ENCODE measurements at regions of chr6 and their contacts with region 1.

Region 1: GRCh38 chr6:53544470-53545308 is at the start of gene GCLC:
- DNase-seq: peak; percentile 84
- H3K4me3 Mint-ChIP-seq: peak within 1 kb of the TSS; percentile 96
- H3K27ac Mint-ChIP-seq: peak within 1 kb of the TSS; percentile 96
- H3K4me1 Mint-ChIP-seq: peaks cover 49% of the 10 kb centered on the region
- H3K27me3 Mint-ChIP-seq: peaks cover 10% of the 10 kb centered on the region
- total RNA-seq, gene GCLC: 26.1 and 28.9 TPM in 2 replicates

Region 2: DNA sequence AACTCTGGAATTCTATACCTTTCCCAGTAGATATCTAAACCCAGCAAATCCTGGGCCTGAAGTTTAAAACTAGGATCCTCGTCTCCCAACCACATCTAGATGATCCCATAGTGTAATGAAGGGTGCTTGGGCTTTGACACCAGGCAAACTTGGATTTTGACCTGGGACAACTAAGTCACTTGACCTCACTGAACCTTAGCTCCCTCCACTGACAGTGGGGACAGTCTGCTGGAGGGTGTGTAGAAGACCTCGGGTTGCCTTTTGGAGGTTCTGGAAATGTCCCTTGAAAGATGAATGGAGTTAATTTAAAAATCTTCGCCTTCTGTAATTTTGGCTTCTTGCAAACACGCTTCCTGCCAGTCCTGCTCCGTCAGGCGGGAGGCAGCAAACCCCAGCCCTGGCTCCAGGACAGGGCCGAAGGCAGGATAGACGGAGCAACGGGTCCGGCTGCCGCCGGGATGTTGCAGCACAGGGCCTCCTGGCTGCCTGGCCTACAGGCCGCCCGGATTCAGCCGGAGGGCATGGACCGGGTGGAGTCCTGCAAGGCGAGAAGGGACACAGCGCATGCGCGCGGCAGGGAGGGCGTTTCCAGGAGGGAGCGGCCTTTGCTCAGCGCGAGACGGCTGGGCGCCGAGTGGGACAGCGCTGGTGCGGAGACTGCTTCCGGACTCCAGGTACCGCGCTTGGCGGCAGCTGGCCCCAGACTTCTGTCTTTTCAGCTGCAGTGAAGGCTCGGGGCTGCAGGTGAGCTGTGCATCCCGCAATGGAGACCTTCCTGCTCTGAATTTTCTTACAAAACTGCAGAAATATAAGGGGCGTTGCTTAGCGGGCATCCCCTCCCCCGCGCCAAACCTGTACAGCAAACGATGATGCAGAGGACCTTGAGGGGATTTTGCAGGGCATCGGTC is 873.9 kb before region 1 on chr6 and contains the start of gene TMEM14A:
- intact Hi-C with region 1: loop called (anchors 5 kb)
- DNase-seq: peak; percentile 91
- H3K4me3 Mint-ChIP-seq: peak within 1 kb of the TSS; percentile 92
- H3K27ac Mint-ChIP-seq: peak within 1 kb of the TSS; percentile 60
- H3K4me1 Mint-ChIP-seq: peaks cover 33% of the 10 kb centered on the region
- H3K27me3 Mint-ChIP-seq: peaks cover 5% of the 10 kb centered on the region
- total RNA-seq, gene TMEM14A: 12.2 and 15.1 TPM in 2 replicates

Region 3: DNA sequence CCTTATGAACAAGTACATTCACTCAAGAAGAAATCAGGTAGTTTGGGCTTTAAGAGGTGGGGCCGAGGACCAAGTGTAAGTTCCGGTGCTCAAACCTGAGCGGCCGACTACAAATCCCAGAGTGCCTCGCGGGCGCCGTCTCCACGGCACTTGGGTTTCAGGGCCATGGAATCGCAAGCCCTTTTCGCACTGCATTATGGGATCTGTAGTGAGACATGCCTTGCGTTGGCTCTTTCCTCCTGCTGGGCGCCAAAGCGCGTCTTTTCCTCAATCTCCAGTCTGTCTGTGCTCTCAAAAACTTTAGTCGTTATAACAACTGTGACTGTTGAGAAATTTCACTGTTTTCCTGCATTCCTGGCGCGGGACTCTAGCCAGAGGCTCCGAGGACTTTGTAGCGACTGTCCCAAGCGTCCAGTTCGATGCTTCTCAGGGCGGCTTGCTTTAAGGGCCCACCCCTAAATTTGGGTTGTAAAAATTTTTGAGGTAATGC is 479.9 kb before region 1 on chr6:
- intact Hi-C with region 1: loop called (anchors 1 kb)
- DNase-seq: peak; percentile 94
- H3K4me3 Mint-ChIP-seq: peak overlapping the region; percentile 99
- H3K27ac Mint-ChIP-seq: peak overlapping the region; percentile 99
- H3K4me1 Mint-ChIP-seq: peaks cover 46% of the 10 kb centered on the region
- H3K27me3 Mint-ChIP-seq: peaks cover 2% of the 10 kb centered on the region

Region 4: GRCh38 chr6:53348371-53349208 is 196.1 kb before region 1 on chr6 and contains the start of gene ELOVL5:
- intact Hi-C with region 1: loop called (anchors 5 kb)
- DNase-seq: peak; percentile 94
- H3K4me3 Mint-ChIP-seq: peak within 1 kb of the TSS; percentile 96
- H3K27ac Mint-ChIP-seq: peak within 1 kb of the TSS; percentile 93
- H3K4me1 Mint-ChIP-seq: peaks cover 48% of the 10 kb centered on the region
- H3K27me3 Mint-ChIP-seq: peaks cover 8% of the 10 kb centered on the region
- total RNA-seq, gene ELOVL5: 121 and 131 TPM in 2 replicates

Region 5: DNA sequence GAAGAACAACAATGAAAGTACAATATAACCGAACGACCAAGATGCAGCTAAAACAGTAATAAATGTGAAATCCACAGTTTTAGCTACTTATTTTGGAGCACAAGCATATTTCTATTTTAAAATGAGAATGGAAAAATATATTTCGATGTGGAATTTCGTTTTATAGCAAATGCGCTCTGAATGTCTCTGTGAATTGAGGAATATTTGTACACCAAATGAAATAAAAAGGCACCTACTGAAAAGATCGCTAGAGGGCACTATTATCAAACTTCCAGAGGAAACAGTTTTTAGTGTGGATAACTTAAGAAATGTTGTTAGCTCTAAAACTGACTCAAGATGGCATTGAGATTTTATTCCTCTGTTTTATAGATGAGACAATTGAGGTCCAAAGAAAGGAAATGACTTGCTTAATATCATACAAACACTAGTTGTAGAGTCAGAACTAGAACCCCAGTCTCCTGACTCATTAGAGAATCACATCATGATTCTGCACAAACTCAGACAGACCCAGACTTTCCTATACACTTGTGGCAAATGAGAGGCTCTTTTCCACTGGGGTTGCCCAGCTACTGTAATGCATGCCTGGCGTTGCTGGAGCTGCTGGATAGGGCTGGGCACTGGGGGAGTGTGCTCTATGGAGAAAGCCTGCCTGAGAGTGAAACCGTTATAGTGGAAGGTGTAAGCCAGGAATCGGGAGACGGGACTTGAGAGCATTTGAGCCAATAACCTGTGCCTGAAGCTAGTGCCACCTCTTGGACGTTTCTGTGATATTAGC is 51.6 kb before region 1 on chr6:
- intact Hi-C with region 1: loop called (anchors 1 kb)
- DNase-seq: no peak
- H3K4me3 Mint-ChIP-seq: no peak overlapping the region
- H3K27ac Mint-ChIP-seq: peak overlapping the region; percentile 25
- H3K4me1 Mint-ChIP-seq: peaks cover 15% of the 10 kb centered on the region
- H3K27me3 Mint-ChIP-seq: peaks cover 22% of the 10 kb centered on the region

Region 6: DNA sequence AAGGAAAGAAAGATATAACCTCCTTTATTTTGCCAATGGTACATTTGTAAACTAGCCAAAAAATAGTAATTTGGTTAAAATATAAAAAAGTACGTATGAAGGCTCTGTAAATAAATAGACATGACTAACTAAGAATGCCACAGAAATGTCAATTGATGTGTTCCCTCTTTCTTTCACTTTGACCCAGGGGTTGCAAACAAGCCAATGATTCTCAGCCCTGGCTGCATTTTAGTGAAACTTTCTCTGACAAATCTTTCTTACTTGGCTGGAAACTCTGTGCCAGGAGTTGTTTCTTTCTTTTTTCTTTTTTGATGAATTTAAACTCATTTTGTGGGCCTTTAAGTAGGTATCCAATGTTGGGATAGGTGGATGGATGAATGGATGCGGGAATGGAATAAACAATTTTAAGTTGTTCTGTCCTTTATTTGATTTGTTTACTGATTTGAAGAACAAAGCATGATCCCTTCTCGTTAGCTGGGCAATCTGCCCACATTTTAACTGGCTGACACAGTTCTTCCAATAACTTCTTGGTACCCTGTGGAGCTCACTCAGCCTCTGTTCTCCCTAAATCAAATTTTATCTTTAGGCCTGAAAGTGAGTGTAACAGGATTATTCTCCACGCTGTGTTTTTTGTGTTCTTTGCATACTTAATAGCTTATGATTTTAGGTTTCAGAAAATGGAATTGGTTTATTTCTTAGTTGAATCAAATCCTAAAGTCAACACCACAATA is 58.9 kb after region 1 on chr6:
- intact Hi-C with region 1: no loop called
- DNase-seq: no peak
- H3K4me3 Mint-ChIP-seq: no peak overlapping the region
- H3K27ac Mint-ChIP-seq: no peak overlapping the region
- H3K4me1 Mint-ChIP-seq: no peaks in the 10 kb centered on the region
- H3K27me3 Mint-ChIP-seq: peaks cover 8% of the 10 kb centered on the region

Region 7: GRCh38 chr6:53725791-53726431 is 181.2 kb after region 1 on chr6:
- intact Hi-C with region 1: loop called (anchors 5 kb)
- DNase-seq: peak; percentile 60
- H3K4me3 Mint-ChIP-seq: no peak overlapping the region
- H3K27ac Mint-ChIP-seq: no peak overlapping the region
- H3K4me1 Mint-ChIP-seq: peaks cover 14% of the 10 kb centered on the region
- H3K27me3 Mint-ChIP-seq: peaks cover 14% of the 10 kb centered on the region

Measured in activated T-helper 1 cell treated with anti-CD3 and anti-CD28 coated beads, Interleukin-12 subunit alpha, Interleukin-12 subunit beta, Interleukin-2, Interleukin-4 antibody, amounts not matched to agents 30 ng/mL and 10 ng/mL and 1 ng/mL, durations not matched to agents 14 hours and 24 hours and 36 hours (primary cell).